GM12878 (cell line): ENCODE measurements at regions of chr2 and their contacts with region 1.

Region 1: DNA sequence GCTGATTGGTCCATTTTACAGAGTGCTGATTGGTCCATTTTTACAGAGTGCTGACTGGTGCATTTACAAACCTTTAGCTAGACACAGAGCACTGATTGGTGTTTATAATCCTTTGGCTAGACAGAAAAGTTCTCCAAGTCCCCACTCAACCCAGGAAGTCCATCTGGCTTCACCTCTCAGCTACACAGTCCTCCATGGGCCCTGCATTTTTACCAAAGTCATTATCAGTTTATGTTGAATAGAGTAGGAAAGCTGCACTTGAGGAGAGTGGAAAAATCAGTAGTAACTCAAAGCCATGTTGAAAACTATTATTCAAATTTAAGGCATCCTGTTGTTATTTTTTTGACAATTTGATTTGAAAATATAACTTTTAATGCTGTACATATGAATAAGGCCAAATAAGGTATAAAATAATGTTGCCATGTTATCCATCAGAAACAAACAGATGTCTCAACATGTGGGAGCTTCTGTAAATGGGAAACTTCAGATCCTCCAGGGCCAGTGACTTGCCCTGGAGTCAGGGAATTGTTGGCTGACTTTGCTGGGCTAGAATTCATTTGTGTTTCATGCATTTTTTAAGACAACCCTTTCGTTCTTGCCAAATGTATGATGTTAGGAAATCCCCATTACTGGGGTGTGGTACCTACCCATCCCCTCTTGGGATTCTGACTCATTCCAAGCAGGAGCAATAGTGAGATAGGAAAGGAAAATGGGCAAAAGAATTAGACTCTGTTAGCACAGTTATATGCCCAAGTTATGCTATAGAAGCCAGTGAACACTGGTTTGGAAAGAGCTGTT is 37.8 kb upstream of the CCDC195 start:
- DNase-seq: no peak
- ATAC-seq: no peak
- H3K4me3 ChIP-seq: no peak overlapping the region
- H3K27ac ChIP-seq: no peak overlapping the region
- H3K4me1 ChIP-seq: no peaks in the 10 kb centered on the region
- H3K27me3 ChIP-seq: no peaks in the 10 kb centered on the region
- CTCF ChIP-seq: no peak
- EP300 ChIP-seq: no peak
- POLR2A ChIP-seq: no peak
- RAD21 ChIP-seq: no peak

Region 2: DNA sequence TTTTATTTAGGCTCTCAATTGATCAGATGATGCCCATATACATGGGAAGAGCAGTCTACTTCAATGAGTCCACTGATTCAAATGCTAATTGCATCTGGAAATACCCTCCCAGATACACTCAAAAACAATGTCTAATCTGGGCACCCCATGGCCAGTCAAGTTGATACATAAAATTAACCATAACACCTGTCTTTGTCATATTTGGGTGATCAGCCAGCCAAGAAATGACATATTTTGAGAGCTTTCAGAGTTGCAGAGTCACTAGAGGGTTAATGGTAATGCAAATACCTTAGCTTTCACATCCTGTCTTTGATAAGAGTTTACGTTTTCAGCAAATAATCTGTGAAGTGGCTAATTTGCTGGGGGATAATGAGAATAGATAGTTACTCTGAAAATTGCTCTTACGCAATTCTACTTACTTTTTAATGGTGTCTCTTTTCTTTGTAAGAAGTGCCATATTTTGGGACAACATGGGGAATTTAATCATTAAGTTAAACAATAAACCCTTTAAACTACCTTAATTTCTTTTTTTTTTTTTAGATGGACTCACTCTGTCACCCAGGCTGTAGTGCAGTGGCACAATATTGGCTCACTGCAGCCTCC is 86.9 kb before region 1 on chr2:
- CTCF ChIA-PET with region 1: no interaction called
- POLR2A ChIA-PET with region 1: no interaction called
- RAD21 ChIA-PET with region 1: no interaction called
- SMC1A ChIA-PET with region 1: no interaction called
- in situ Hi-C with region 1: no loop called
- intact Hi-C with region 1: loop called (anchors 5 kb)
- DNase-seq: peak; percentile 92
- ATAC-seq: peak; percentile 97
- H3K4me3 ChIP-seq: 0 out of 2 replicates have a peak overlapping the region, but pooled peaks have one; percentile 10
- H3K27ac ChIP-seq: peak overlapping the region; percentile 48
- H3K4me1 ChIP-seq: peaks cover 3% of the 10 kb centered on the region
- H3K27me3 ChIP-seq: no peaks in the 10 kb centered on the region
- CTCF ChIP-seq: no peak
- EP300 ChIP-seq: peak; percentile 96 to 97
- POLR2A ChIP-seq: no peak
- RAD21 ChIP-seq: no peak

Region 3: GRCh38 chr2:224764565-224765236 is 10.8 kb after region 1 on chr2:
- CTCF ChIA-PET with region 1: interaction called, 3 read pairs
- POLR2A ChIA-PET with region 1: no interaction called
- RAD21 ChIA-PET with region 1: no interaction called
- SMC1A ChIA-PET with region 1: interaction called, 11 read pairs
- in situ Hi-C with region 1: no loop called
- intact Hi-C with region 1: no loop called
- DNase-seq: peak; percentile 15
- ATAC-seq: peak; percentile 69
- H3K4me3 ChIP-seq: no peak overlapping the region
- H3K27ac ChIP-seq: peak overlapping the region; percentile 44; the same call in 1 of the 2 replicates
- H3K4me1 ChIP-seq: peaks cover 13% of the 10 kb centered on the region
- H3K27me3 ChIP-seq: no peaks in the 10 kb centered on the region
- CTCF ChIP-seq: no peak
- EP300 ChIP-seq: no peak
- POLR2A ChIP-seq: no peak
- RAD21 ChIP-seq: no peak